ENCODE measurements at regions of chr20 and their contacts with region 1.

Region 1: DNA sequence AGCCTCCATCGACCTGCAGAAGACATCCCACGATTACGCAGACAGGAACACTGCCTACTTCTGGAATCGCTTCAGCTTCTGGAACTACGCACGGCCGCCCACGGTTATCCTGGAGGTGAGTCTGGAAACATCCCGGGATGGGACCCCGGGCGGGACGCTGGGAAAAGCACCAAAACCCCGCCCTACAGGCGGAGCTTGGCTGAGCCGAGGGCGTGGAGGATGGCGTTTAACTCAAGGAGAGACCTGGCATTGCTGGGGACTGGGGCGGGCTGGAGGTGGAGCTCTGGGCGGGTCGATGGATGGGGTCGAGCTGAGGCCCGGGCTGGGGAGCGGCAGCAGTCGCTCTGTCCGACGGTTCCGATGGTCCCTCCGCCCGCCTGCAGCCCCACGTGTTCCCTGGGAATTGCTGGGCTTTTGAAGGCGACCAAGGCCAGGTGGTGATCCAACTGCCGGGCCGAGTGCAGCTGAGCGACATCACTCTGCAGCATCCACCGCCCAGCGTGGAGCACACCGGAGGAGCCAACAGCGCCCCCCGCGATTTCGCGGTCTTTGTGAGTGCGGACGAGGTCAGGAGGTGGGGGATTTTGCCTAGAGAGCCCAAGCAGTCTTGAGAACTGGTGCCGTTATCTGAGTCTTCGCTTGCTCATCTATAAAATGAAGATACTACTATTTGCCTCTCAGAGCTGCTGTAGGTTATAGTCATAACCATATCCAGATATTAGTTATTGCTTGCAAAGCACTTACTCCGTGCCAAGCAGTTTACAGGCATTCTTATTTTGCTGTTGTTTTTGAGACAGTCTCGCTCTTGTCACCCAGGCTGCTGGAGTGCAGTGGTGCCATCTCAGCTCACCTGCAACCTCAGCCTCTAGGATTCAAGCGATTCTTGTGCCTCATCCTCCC is 3.8 kb downstream of the SPAG4 start:
- DNase-seq: peak; percentile 90
- H3K4me3 ChIP-seq: peak overlapping the region; percentile 48 to 83
- H3K27ac ChIP-seq: peak overlapping the region; percentile 31 to 50; a peak in 3 of 4 replicates
- H3K4me1 ChIP-seq: peaks cover 8 to 11% of the 10 kb centered on the region in 2 experiments; a peak in 1 of 4 replicates
- H3K27me3 ChIP-seq: no peaks in the 10 kb centered on the region
- CTCF ChIP-seq: peak; percentile 69
- EP300 ChIP-seq: no peak
- RAD21 ChIP-seq: peak; percentile 44

Region 2: GRCh38 chr20:35039146-35039545 is 580.3 kb before region 1 on chr20:
- CTCF ChIA-PET with region 1: no interaction called
- POLR2A ChIA-PET with region 1: no interaction called
- DNase-seq: no peak
- H3K4me3 ChIP-seq: no peak overlapping the region
- H3K27ac ChIP-seq: no peak overlapping the region; a peak in 1 of 4 replicates
- H3K4me1 ChIP-seq: no peaks in the 10 kb centered on the region
- H3K27me3 ChIP-seq: no peaks in the 10 kb centered on the region
- CTCF ChIP-seq: no peak
- EP300 ChIP-seq: no peak
- RAD21 ChIP-seq: no peak

Region 3: GRCh38 chr20:35571555-35571954 is 47.9 kb before region 1 on chr20:
- CTCF ChIA-PET with region 1: no interaction called
- POLR2A ChIA-PET with region 1: no interaction called
- DNase-seq: no peak
- H3K4me3 ChIP-seq: no peak overlapping the region
- H3K27ac ChIP-seq: no peak overlapping the region
- H3K4me1 ChIP-seq: no peaks in the 10 kb centered on the region
- H3K27me3 ChIP-seq: no peaks in the 10 kb centered on the region
- CTCF ChIP-seq: no peak
- EP300 ChIP-seq: no peak
- RAD21 ChIP-seq: no peak

Region 4: DNA sequence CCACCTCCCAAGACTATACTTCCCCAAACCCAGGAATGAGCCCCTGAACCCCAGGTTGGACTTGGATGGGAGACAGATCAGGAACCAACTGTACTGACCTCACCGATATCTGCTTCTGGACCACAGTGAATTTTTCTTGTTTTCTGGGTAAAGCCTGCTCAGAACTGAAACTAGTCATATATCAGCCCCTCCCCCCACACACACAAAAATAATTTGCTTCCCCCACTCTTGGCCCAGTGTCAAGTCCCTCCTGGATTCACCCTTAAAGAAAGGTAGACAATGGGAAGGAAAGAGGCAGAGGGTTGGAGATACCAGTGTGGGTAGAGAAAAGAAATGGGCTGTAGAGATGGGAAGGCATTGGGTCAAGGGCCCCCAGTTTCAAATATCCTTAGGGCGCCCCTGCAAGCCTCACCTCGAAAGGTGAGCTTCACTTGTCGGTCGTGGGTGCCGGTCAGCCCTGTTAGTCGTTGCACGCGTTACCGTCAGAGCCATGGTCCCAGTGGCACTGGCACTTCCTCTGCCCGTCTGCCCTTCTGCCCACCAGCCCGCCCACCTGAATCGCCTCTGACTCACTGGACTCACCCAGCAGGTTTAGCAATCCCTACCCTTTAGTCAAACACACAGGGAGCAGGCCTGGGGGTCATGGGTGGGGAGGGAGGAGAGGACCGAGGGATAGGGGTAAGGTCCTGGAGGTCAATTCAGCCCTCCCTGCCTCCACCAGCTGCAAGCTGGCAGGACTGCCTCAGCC is 12.3 kb before region 1 on chr20:
- CTCF ChIA-PET with region 1: interaction called, 11 read pairs
- POLR2A ChIA-PET with region 1: interaction called, 4 read pairs
- DNase-seq: no peak
- H3K4me3 ChIP-seq: no peak overlapping the region
- H3K27ac ChIP-seq: no peak overlapping the region
- H3K4me1 ChIP-seq: no peaks in the 10 kb centered on the region; a peak in 1 of 4 replicates
- H3K27me3 ChIP-seq: no peaks in the 10 kb centered on the region
- CTCF ChIP-seq: no peak
- EP300 ChIP-seq: no peak
- RAD21 ChIP-seq: no peak

Region 5: DNA sequence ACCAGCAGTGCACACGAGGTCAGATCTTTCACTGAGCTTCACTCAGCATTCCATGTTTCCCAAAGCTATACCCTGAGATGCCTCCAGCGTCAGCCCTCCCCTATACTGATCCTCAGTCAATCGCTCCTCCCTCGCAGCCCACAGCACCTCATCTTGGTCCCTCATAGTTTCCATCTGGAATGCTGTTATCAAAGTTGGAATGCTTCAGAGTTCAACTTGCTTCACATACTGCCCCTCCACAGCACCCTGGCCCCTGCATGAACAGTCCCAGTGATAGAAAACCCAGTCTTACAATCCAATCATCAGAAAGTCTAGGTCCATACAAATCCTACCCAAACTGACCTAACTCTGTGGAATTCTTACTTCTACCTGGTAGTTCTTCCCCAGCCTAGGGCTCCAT is 16.2 kb after region 1 on chr20:
- CTCF ChIA-PET with region 1: interaction called, 42 read pairs
- POLR2A ChIA-PET with region 1: interaction called, 4 read pairs
- DNase-seq: no peak
- H3K4me3 ChIP-seq: no peak overlapping the region
- H3K27ac ChIP-seq: no peak overlapping the region
- H3K4me1 ChIP-seq: no peaks in the 10 kb centered on the region
- H3K27me3 ChIP-seq: no peaks in the 10 kb centered on the region
- CTCF ChIP-seq: no peak
- EP300 ChIP-seq: no peak
- RAD21 ChIP-seq: no peak

Region 6: DNA sequence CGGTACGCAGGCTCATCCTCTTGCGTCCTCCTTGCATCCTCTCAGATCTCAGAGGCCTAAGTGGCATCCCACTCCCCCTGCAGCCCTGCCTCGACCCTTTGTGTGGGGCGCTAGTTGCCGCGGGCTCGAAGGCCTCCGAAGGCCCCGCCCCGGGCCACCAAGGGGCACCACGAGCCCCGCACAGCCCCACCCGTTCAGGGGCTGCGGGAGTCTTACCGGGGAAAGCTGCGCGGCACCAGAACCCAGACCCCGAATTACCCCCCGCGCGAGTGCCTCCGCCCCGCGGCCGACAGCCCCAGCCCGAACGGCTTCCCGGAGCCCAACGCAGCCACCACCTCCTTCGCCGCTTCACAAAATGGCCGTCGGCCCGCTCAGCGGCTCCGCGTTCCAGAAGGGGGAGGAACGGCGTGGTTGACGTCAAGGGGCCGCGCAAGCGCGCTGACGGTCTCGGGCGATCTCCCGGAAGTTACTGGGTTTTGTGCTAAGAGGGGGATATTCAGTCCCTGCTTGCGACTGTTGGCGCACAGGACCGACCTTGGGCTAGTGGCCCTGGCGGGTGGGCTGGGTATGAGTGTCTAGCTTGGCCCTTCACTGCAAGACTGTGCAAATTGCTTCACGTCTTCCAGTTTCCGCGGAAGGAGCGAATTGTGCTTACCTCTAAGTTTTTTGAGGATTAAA is 45.2 kb after region 1 on chr20 and contains the starts of genes CPNE1 and RBM12:
- CTCF ChIA-PET with region 1: interaction called, 16 read pairs
- POLR2A ChIA-PET with region 1: interaction called, 33 read pairs
- DNase-seq: peak; percentile 98
- H3K4me3 ChIP-seq: peak within 1 kb of the TSS; percentile 78 to 83
- H3K27ac ChIP-seq: peak within 1 kb of the TSS; percentile 94 to 95
- H3K4me1 ChIP-seq: peaks cover 10 to 13% of the 10 kb centered on the region in 2 experiments; a peak in 2 of 4 replicates
- H3K27me3 ChIP-seq: no peaks in the 10 kb centered on the region
- CTCF ChIP-seq: no peak
- EP300 ChIP-seq: peak in 1 of 2 experiments; percentile 12; a peak in 1 of 4 replicates
- RAD21 ChIP-seq: 0 out of 2 replicates have a peak, but pooled peaks have one; percentile 1
- polyA plus RNA-seq, gene CPNE1: 217 and 279 TPM in 2 replicates
- polyA plus RNA-seq, gene RBM12: 41.9 and 56.7 TPM in 2 replicates

Region 7: GRCh38 chr20:35741892-35742740 is 122.7 kb after region 1 on chr20 and contains the start of gene RBM39:
- CTCF ChIA-PET with region 1: interaction called, 3 read pairs
- POLR2A ChIA-PET with region 1: interaction called, 14 read pairs
- DNase-seq: peak; percentile 90
- H3K4me3 ChIP-seq: peak within 1 kb of the TSS; percentile 79 to 82
- H3K27ac ChIP-seq: peak within 1 kb of the TSS; percentile 97 to 99
- H3K4me1 ChIP-seq: peaks cover 12% of the 10 kb centered on the region in 2 experiments; a peak in 3 of 4 replicates
- H3K27me3 ChIP-seq: no peaks in the 10 kb centered on the region
- CTCF ChIP-seq: peak; percentile 41
- EP300 ChIP-seq: peak in 1 of 2 experiments; percentile 34; a peak in 1 of 4 replicates
- RAD21 ChIP-seq: 0 out of 2 replicates have a peak, but pooled peaks have one; percentile 8
- polyA plus RNA-seq, gene RBM39: 68.4 and 98.4 TPM in 2 replicates

Region 8: GRCh38 chr20:36305602-36306551 is 686.4 kb after region 1 on chr20 and contains the start of gene DLGAP4:
- CTCF ChIA-PET with region 1: no interaction called
- POLR2A ChIA-PET with region 1: no interaction called
- DNase-seq: peak; percentile 91
- H3K4me3 ChIP-seq: peak within 1 kb of the TSS in 1 of 2 experiments; percentile 53; a peak in 2 of 4 replicates
- H3K27ac ChIP-seq: no peak within 1 kb of the TSS; a peak in 1 of 4 replicates
- H3K4me1 ChIP-seq: peaks cover 0 to 10% of the 10 kb centered on the region in 2 experiments; a peak in 1 of 4 replicates
- H3K27me3 ChIP-seq: peaks cover 54% of the 10 kb centered on the region
- CTCF ChIP-seq: no peak
- EP300 ChIP-seq: no peak
- RAD21 ChIP-seq: no peak
- polyA plus RNA-seq, gene DLGAP4: 12.7 and 31.2 TPM in 2 replicates

Measured in SK-N-SH (cell line).